ENCODE measurements at regions of chr12 and their contacts with region 1.

Region 1: GRCh38 chr12:3947781-3948180 is 74.6 kb upstream of the PARP11 start:
- DNase-seq: no peak
- H3K4me3 Mint-ChIP-seq: no peak overlapping the region
- H3K27ac Mint-ChIP-seq: peak overlapping the region; percentile 74
- H3K4me1 Mint-ChIP-seq: peaks cover 57% of the 10 kb centered on the region
- H3K27me3 Mint-ChIP-seq: no peaks in the 10 kb centered on the region

Region 2: GRCh38 chr12:3905664-3906063 is 42.1 kb before region 1 on chr12:
- CTCF ChIA-PET with region 1: no interaction called
- intact Hi-C with region 1: loop called (anchors 2 kb)
- DNase-seq: peak; percentile 27
- H3K4me3 Mint-ChIP-seq: peak overlapping the region; percentile 61
- H3K27ac Mint-ChIP-seq: peak overlapping the region; percentile 76
- H3K4me1 Mint-ChIP-seq: peaks cover 49% of the 10 kb centered on the region
- H3K27me3 Mint-ChIP-seq: no peaks in the 10 kb centered on the region

Region 3: DNA sequence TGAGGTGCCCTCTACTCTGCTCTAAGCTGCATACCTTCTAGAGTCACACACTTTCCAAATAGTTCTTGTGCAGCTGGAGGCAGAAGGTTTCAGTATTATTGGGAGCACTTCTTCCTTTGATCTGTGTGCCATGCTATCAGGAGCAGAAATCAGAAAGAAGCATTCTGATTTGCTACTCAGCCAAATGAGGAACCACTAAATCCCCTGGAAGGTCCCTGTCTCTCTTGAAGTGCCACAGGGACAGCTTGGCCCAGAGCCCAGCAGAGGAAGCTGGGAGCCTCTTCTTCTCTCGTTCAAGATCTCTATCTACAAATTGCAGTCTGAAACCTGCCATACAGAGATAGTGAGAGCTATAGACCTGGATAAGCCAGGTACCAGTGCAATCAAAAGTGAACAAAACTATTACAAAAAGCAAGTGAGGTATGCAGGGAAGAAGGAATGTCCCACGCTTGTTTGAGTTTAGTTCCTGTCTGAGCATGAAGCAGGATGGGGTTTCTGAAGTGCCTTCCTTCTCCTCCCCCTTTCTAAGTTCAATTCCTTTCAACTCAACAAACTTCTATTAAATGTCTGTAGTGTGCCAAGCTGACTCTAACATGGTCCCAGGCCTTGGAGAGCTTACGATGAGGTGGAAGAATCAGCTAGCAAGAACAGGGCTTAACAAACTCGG is 26.3 kb after region 1 on chr12:
- CTCF ChIA-PET with region 1: no interaction called
- intact Hi-C with region 1: loop called (anchors 1 kb)
- DNase-seq: peak; percentile 51
- H3K4me3 Mint-ChIP-seq: peak overlapping the region; percentile 60
- H3K27ac Mint-ChIP-seq: peak overlapping the region; percentile 86
- H3K4me1 Mint-ChIP-seq: peaks cover 61% of the 10 kb centered on the region
- H3K27me3 Mint-ChIP-seq: no peaks in the 10 kb centered on the region

Measured in activated naive CD4-positive, alpha-beta T cell treated with anti-CD3 and anti-CD28 coated beads for 36 hours (primary cell).